ENCODE measurements at regions of chr1 and their contacts with region 1.

Region 1: DNA sequence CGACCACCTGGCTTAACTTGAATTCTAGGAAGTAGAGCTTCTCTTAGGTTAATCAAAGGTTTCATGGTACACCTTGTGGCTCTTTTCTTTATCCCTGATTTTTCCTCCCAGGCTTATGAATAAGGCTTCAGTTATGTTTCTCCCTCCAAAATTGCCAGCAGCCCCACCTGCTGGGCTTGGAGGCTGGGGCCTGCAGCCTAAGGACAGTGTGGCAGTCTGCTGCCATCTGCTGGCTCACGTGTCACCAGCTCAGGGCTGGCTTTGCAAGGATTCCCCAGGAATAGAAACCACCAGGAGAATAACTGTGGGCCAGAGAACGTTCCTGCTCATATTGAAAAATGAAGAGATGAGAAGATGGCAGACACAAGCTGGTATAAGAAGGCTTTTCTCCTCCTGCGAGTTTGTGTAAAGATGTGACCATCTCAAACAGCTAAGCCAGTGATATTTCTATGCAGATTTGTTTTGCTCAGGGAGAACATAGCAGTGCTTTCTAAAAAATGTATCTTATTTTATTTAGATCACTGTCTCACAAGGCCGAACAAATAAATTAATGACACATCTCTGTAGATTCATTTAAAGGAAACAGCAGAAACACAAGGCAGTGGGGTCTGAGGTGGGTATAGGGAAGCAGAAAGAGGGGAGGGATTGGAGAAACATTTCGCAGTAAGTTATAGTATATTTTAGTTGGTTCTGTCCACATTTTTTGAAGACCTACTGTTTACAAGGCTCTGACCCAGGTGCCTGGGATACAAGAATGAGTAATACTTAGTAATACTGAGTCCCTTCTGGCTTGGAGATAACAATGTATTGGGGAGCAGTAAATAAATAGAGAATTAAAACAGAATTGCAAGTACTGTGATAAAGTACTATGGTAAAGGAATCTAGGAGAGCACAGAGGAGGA is 291.1 kb upstream of the SGIP1 start:
- DNase-seq: peak; percentile 88
- ATAC-seq: peak; percentile 67
- H3K4me3 Mint-ChIP-seq: no peak overlapping the region
- H3K27ac Mint-ChIP-seq: no peak overlapping the region
- H3K4me1 Mint-ChIP-seq: peaks cover 21% of the 10 kb centered on the region
- H3K27me3 Mint-ChIP-seq: peaks cover 6% of the 10 kb centered on the region

Region 2: GRCh38 chr1:65717815-65718454 is 525.0 kb before region 1 on chr1:
- CTCF ChIA-PET with region 1: interaction called, 10 read pairs
- DNase-seq: peak; percentile 48
- ATAC-seq: no peak
- H3K4me3 Mint-ChIP-seq: no peak overlapping the region
- H3K27ac Mint-ChIP-seq: no peak overlapping the region
- H3K4me1 Mint-ChIP-seq: no peaks in the 10 kb centered on the region
- H3K27me3 Mint-ChIP-seq: peaks cover 48% of the 10 kb centered on the region

Region 3: GRCh38 chr1:66231217-66231616 is 11.7 kb before region 1 on chr1:
- CTCF ChIA-PET with region 1: interaction called, 25 read pairs
- DNase-seq: no peak
- ATAC-seq: peak; percentile 39
- H3K4me3 Mint-ChIP-seq: no peak overlapping the region
- H3K27ac Mint-ChIP-seq: no peak overlapping the region
- H3K4me1 Mint-ChIP-seq: peaks cover 3% of the 10 kb centered on the region
- H3K27me3 Mint-ChIP-seq: peaks cover 14% of the 10 kb centered on the region

Region 4: DNA sequence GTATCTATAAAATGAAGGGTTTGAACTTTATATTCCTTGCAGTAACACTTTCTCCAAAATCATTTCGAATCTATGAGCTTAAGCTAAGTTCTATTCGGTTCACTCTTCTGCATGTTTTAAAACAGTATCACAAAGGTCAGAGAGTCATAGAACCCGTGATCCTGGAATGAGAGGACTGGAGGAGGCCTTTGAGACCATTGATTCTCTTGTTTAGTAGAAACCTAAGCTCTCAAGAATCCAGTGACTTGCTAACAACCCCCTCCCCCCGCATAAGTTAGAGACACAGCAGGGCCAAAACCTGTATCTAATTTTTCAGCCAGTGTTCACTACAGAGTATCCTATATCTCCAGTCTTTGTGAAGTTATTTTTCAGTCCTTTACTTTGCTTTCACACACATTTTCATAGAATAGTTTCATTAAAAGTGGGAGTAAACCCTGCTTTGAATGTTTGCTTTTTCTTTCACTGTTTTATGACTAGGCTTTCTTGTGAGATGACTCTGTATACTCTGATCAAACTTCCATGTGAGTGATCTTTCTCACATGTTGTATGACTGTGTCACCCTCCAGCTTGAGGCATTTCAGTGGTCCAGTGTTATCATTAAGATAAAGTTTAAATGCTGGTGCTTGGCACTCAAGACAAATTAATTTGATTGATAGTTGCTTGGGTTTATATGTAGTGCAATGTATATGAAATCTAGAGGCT is 15.7 kb after region 1 on chr1:
- CTCF ChIA-PET with region 1: interaction called, 38 read pairs
- DNase-seq: no peak
- ATAC-seq: peak; percentile 88
- H3K4me3 Mint-ChIP-seq: no peak overlapping the region
- H3K27ac Mint-ChIP-seq: peak overlapping the region; percentile 44
- H3K4me1 Mint-ChIP-seq: peaks cover 84% of the 10 kb centered on the region
- H3K27me3 Mint-ChIP-seq: no peaks in the 10 kb centered on the region

Region 5: DNA sequence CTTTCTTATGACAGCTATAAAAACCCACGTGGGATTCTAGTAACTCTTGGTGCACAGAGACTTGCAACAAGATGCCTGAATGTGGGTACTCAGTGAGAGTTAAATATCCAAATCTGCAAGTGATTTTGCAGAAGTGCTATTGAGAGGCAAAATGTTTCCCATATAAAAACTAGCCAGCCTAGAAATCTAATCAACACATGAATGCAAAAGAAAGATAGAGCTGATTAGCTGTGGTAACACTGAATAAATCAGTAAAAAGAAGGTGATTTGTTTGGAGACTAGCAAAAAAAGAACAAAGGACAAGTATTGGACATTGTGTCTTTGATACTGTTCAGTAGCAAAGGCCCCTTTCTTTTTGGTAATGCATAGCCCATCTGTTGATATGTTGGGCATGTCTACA is 77.3 kb after region 1 on chr1:
- CTCF ChIA-PET with region 1: no interaction called
- DNase-seq: no peak
- ATAC-seq: no peak
- H3K4me3 Mint-ChIP-seq: no peak overlapping the region
- H3K27ac Mint-ChIP-seq: no peak overlapping the region
- H3K4me1 Mint-ChIP-seq: peaks cover 19% of the 10 kb centered on the region
- H3K27me3 Mint-ChIP-seq: no peaks in the 10 kb centered on the region

Region 6: GRCh38 chr1:66331657-66332547 is 89.0 kb after region 1 on chr1:
- CTCF ChIA-PET with region 1: interaction called, 13 read pairs
- DNase-seq: peak; percentile 79
- ATAC-seq: peak; percentile 34
- H3K4me3 Mint-ChIP-seq: peak overlapping the region; percentile 85
- H3K27ac Mint-ChIP-seq: peak overlapping the region; percentile 96
- H3K4me1 Mint-ChIP-seq: peaks cover 53% of the 10 kb centered on the region
- H3K27me3 Mint-ChIP-seq: no peaks in the 10 kb centered on the region

Region 7: GRCh38 chr1:66446261-66447001 is 203.5 kb after region 1 on chr1:
- CTCF ChIA-PET with region 1: interaction called, 406 read pairs
- DNase-seq: peak; percentile 53
- ATAC-seq: peak; percentile 67
- H3K4me3 Mint-ChIP-seq: peak overlapping the region; percentile 85
- H3K27ac Mint-ChIP-seq: peak overlapping the region; percentile 98
- H3K4me1 Mint-ChIP-seq: peaks cover 33% of the 10 kb centered on the region
- H3K27me3 Mint-ChIP-seq: peaks cover 21% of the 10 kb centered on the region

Measured in activated CD8-positive, alpha-beta memory T cell treated with anti-CD3 and anti-CD28 coated beads, Interleukin-2, amount 10 ng/mL, durations not matched to agents 7 days and 5 days (primary cell).